Mammary epithelial cell (primary cell): ENCODE measurements at regions of chr16 and their contacts with region 1.

Region 1: DNA sequence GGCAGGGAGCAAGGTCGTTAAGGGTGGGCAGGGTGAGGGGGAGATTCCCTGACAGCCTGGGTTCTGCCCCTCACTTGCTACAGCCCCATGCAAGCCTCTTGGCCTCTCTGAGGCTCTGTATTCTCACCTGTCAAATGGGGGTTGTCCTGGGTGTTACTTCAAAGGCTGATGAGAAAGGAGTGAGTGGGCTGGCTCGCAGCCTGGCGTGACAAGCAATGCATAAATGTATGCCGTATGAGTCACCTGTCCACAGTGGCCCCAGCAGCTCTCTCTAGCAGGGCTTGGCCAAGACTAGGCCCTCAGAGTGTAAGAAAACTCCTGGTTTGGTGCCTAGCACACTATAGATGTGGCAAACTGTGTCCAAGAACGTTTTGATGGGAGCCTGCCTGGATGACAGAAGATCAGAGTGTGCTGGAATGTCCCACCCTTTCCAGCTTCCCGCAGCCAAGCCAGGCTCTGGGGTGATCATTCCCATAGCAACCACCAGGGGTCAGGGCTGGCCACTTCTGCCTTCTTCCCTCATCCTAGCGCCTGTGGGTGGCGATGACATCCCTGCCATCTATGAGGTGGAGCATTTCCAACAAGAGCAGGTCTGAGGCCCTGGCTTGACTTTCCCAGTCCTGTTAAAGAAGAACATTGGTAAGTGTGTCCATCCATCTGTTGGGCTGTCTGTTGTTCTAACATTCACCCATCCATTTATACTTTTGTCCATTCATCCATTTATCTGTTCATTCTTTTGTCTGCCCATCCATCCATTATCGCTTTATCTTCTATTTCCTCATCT is 37.2 kb upstream of the ADGRG1 start:
- DNase-seq: peak; percentile 90
- H3K4me3 ChIP-seq: peak overlapping the region in 1 of 3 experiments; percentile 0
- H3K27ac ChIP-seq: peak overlapping the region; percentile 40
- H3K4me1 ChIP-seq: peaks cover 19% of the 10 kb centered on the region
- H3K27me3 ChIP-seq: no peaks in the 10 kb centered on the region
- CTCF ChIP-seq: peak; percentile 89 to 97

Region 2: DNA sequence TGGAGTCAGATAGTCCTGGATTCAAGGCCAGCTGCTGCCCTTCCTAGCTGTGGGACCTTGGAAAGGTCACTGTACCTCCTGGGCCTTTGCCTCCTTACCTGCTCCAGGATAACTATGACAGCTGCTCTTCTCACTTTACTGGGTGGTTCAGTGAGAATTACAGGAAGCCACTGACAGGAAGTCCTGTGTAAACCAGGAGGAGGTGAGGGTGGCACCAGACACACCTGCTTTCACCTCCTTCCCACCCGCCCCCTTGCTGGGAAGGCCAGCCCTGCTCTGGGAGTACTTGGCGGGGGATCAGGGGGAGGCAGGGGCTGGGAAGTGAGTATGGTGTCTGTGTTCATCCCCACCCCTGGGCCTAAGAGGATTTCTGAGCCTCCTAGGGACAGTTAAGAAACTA is 456.3 kb before region 1 on chr16:
- CTCF ChIA-PET with region 1: no interaction called
- dilution Hi-C with region 1: no loop called
- in situ Hi-C with region 1: no loop called
- intact Hi-C with region 1: no loop called
- DNase-seq: no peak
- H3K4me3 ChIP-seq: no peak overlapping the region
- H3K27ac ChIP-seq: no peak overlapping the region
- H3K4me1 ChIP-seq: peaks cover 5% of the 10 kb centered on the region
- H3K27me3 ChIP-seq: no peaks in the 10 kb centered on the region
- CTCF ChIP-seq: no peak

Region 3: DNA sequence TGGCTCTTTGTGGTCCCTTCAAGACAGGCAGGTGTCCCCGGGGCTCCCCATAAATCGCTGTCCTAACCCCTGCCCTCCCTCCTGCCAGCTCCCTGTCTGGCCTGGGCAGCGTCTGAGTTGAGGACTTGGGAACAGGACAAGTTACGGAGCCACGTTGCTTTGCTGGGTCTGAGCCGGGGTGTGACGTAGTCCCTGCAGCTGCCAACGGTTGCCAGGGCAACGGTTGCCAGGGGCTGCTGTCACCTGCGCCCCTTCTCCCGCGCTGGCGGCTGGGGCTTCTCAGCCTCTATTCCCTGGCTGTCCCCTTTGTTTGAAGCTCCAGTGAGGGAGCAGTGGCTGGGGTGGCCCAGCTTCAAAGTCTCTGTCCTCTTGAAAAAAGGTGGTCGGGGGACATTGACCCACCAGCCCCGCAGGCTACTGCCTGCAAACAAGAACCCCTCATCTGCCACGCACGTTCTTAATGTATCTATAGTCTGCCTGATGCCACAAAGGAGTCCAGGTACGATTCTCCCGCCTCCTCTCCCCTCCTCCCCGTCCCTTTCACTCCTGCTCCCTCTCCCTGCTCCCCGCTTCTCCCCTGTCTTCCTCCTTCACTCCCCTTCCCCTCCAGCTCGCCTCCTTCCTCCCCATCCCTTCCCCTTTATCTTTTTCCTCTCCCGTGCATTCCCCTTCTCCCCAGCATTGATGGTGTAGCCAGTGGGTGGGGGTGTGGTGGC is 48.1 kb after region 1 on chr16:
- CTCF ChIA-PET with region 1: interaction called, 3 read pairs
- dilution Hi-C with region 1: loop called (anchors 5 kb)
- in situ Hi-C with region 1: no loop called
- intact Hi-C with region 1: no loop called
- DNase-seq: no peak
- H3K4me3 ChIP-seq: no peak overlapping the region
- H3K27ac ChIP-seq: no peak overlapping the region
- H3K4me1 ChIP-seq: peaks cover 67% of the 10 kb centered on the region
- H3K27me3 ChIP-seq: no peaks in the 10 kb centered on the region
- CTCF ChIP-seq: no peak

Region 4: GRCh38 chr16:57720142-57720575 is 128.9 kb after region 1 on chr16:
- CTCF ChIA-PET with region 1: no interaction called
- dilution Hi-C with region 1: no loop called
- in situ Hi-C with region 1: loop called in 1 of 2 experiments (anchors 25 kb)
- intact Hi-C with region 1: no loop called
- DNase-seq: peak; percentile 39
- H3K4me3 ChIP-seq: no peak overlapping the region
- H3K27ac ChIP-seq: no peak overlapping the region
- H3K4me1 ChIP-seq: no peaks in the 10 kb centered on the region
- H3K27me3 ChIP-seq: peaks cover 3% of the 10 kb centered on the region
- CTCF ChIP-seq: peak; percentile 60 to 68

Region 5: DNA sequence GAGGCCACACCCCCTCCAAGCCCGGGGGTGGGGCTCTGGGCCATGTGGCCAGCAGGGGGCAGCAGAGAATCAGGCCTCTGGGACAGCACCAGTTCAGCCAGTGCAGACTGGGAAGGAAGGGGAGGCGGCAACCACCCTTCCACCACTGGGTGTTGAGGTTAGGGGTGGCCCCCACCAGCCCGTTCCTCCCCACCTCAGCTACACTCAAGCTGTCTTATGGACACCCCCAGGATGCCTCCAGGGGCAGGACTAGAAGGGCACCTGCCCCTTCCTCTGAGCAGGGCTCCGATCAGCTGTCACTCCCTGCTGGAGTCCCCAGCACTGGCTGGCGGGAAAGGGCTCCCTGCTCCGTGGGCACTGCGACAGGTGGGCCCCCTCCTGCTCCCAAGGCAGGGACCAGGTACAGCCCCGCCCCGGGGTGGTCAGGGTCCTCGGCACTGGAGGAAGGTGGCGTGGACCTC is 166.1 kb after region 1 on chr16:
- CTCF ChIA-PET with region 1: no interaction called
- dilution Hi-C with region 1: no loop called
- in situ Hi-C with region 1: no loop called
- intact Hi-C with region 1: loop called (anchors 1 kb)
- DNase-seq: peak; percentile 62
- H3K4me3 ChIP-seq: no peak overlapping the region
- H3K27ac ChIP-seq: no peak overlapping the region
- H3K4me1 ChIP-seq: peaks cover 10% of the 10 kb centered on the region
- H3K27me3 ChIP-seq: no peaks in the 10 kb centered on the region
- CTCF ChIP-seq: peak; percentile 85 to 98

Region 6: DNA sequence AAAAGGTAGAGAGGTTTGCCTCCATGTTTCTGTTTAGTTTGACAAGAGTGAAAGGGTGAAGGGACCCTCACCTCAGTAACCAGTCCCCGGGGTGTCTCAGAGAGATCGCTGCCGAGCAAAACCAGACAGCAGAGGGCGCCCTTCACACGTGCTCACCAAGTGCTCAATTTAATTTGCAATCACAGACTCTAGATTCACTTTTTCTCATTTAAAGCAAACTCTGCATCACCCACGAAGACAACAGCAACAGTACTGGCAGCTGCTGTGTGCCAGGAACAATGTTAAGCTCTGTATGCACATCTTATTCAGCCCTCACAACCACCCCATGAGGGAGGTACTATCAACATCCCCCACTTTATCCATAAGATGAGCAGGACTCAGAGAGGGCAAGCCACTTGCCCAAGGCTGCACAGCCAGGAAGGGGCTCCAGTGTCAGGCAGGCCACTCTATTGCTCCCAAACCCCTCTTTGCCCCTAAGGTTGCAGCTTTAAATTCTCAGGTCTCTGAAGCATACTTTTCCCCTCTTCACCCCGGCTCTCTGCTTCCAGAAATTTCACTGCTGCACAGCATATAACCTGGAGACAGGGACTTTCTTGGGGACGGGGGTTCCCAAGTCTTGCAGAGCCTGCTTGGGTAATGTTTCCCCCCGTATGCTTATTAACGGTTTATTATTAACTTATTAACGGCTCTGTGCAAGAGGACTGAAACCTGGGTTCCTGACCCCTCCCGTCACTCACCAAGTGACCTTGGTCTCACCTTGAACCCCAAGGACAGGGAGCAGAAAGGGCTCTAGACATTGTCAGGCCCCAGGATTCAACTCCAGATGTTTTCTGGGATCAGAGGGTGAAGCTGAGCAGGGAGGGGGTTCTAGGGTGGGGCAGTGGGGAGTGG is 308.7 kb after region 1 on chr16:
- CTCF ChIA-PET with region 1: no interaction called
- dilution Hi-C with region 1: no loop called
- in situ Hi-C with region 1: loop called in 1 of 2 experiments (anchors 25 kb)
- intact Hi-C with region 1: no loop called
- DNase-seq: peak; percentile 42
- H3K4me3 ChIP-seq: no peak overlapping the region
- H3K27ac ChIP-seq: no peak overlapping the region
- H3K4me1 ChIP-seq: peaks cover 3% of the 10 kb centered on the region
- H3K27me3 ChIP-seq: no peaks in the 10 kb centered on the region
- CTCF ChIP-seq: peak; percentile 90 to 95

Region 7: DNA sequence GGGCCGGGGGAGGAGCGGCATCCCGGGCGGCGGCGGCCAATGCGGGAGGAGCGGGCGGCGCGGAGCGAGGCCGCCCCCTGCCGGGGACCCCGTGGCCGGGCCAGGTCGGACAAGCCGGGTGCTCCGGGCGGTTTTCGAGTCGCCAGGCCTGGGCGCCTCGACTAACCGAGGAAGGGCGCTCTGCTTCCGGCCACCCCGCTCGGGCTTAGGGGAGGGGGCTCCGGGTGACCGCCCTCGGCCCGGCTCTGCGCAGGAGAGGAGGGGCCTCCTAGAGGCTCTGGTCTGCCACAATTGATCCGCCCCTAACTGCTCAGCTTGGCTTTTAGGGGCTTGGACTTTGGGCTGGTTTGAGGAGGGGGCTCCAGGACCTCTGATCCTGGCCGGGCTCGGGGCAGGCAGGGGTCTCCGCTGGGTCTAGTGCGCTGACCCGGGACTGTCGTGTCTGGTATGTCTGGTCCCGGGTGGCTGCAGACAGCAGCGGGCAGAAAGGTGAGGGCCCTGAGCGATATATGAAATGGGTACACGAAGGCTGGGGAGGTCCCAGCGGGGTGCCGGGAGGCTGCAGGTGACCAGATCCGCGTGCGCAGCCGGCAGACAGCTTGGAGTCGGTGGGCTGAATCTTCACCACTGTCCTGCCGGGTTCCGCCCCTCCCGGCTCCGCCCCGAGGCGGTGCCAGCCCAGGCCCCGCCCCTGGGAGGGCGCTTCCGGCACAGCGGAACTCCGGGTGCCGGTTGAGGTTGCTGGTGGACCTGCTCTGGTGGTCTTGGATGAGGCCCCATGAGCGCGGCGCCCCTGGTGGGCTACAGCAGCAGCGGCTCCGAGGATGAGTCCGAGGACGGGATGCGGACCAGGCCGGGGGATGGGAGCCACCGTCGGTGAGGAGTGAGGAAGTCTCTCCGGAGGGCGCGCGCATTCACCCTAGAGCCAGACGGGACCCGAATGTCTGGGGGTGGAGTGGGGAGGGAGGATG is 409.7 kb after region 1 on chr16 and contains the start of gene USB1:
- CTCF ChIA-PET with region 1: no interaction called
- dilution Hi-C with region 1: no loop called
- in situ Hi-C with region 1: loop called in 1 of 2 experiments (anchors 25 kb)
- intact Hi-C with region 1: loop called (anchors 5 kb)
- DNase-seq: peak; percentile 83
- H3K4me3 ChIP-seq: peak within 1 kb of the TSS; percentile 66 to 93 (median 85)
- H3K27ac ChIP-seq: peak within 1 kb of the TSS; percentile 49
- H3K4me1 ChIP-seq: peaks cover 33% of the 10 kb centered on the region
- H3K27me3 ChIP-seq: no peaks in the 10 kb centered on the region
- CTCF ChIP-seq: peak; percentile 19 to 64
- total RNA-seq, gene USB1: 36.2 to 61.1 TPM